Caco-2 (cell line): ENCODE measurements at regions of chr13 and their contacts with region 1.

Region 1: DNA sequence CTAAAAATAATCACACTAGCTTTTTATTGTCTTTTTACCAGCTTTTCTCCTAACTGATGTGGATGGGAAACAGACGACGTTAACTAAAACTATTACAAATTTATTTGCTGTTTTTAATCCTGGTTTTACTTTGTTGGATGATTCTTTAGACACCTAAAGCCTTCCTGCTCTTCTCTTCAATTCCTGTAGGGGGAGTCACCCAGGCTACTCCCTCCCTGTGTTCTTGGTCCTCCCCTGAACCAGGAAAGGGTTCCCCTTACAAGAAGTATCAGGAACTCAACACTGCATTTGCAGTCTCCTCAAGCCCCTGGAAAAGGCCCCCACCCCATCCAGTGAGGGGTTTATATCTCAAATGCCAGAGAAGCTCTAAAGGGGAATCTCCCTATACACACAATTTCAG is 206.1 kb downstream of the SUCLA2 start:
- DNase-seq: peak in 1 of 2 experiments; percentile 16
- H3K4me3 ChIP-seq: no peak overlapping the region
- H3K4me3 Mint-ChIP-seq: no peak overlapping the region
- H3K27ac Mint-ChIP-seq: no peak overlapping the region
- H3K4me1 ChIP-seq: no peaks in the 10 kb centered on the region
- H3K4me1 Mint-ChIP-seq: no peaks in the 10 kb centered on the region
- H3K27me3 ChIP-seq: no peaks in the 10 kb centered on the region
- H3K27me3 Mint-ChIP-seq: peaks cover 3% of the 10 kb centered on the region
- CTCF ChIP-seq: peak; percentile 36 to 44

Region 2: DNA sequence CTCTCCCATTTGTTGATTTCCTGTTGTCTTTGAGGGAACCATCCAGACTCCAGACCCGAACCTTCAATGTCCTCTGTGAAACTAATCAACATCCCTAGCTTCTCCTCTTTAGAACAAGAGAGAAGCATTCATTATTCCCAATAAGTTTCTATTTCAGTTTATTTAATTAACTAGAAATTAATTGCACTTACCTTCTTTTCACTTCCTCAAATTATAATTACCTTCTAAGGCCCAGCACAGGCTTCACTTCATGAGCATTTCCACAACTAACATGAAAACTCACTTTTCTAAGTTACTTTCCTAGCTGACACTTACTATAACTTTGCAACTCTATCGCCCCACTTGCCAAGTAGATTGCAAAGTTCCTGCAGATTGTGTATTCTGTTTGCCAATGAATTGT is 826.5 kb before region 1 on chr13:
- CTCF ChIA-PET with region 1: no interaction called
- POLR2A ChIA-PET with region 1: no interaction called
- intact Hi-C with region 1: no loop called
- DNase-seq: no peak
- H3K4me3 ChIP-seq: no peak overlapping the region
- H3K4me3 Mint-ChIP-seq: no peak overlapping the region
- H3K27ac Mint-ChIP-seq: no peak overlapping the region
- H3K4me1 ChIP-seq: no peaks in the 10 kb centered on the region
- H3K4me1 Mint-ChIP-seq: no peaks in the 10 kb centered on the region
- H3K27me3 ChIP-seq: 0 out of 2 replicates have a peak, but pooled peaks cover 1% of the 10 kb centered on the region
- H3K27me3 Mint-ChIP-seq: peaks cover 5% of the 10 kb centered on the region
- CTCF ChIP-seq: no peak

Region 3: GRCh38 chr13:47932950-47933923 is 138.3 kb after region 1 on chr13:
- CTCF ChIA-PET with region 1: no interaction called
- POLR2A ChIA-PET with region 1: no interaction called
- intact Hi-C with region 1: loop called (anchors 5 kb)
- DNase-seq: peak in 1 of 2 experiments; percentile 7
- H3K4me3 ChIP-seq: no peak overlapping the region
- H3K4me3 Mint-ChIP-seq: no peak overlapping the region
- H3K27ac Mint-ChIP-seq: no peak overlapping the region
- H3K4me1 ChIP-seq: no peaks in the 10 kb centered on the region
- H3K4me1 Mint-ChIP-seq: peaks cover 5% of the 10 kb centered on the region
- H3K27me3 ChIP-seq: no peaks in the 10 kb centered on the region
- H3K27me3 Mint-ChIP-seq: no peaks in the 10 kb centered on the region
- CTCF ChIP-seq: no peak

Region 4: DNA sequence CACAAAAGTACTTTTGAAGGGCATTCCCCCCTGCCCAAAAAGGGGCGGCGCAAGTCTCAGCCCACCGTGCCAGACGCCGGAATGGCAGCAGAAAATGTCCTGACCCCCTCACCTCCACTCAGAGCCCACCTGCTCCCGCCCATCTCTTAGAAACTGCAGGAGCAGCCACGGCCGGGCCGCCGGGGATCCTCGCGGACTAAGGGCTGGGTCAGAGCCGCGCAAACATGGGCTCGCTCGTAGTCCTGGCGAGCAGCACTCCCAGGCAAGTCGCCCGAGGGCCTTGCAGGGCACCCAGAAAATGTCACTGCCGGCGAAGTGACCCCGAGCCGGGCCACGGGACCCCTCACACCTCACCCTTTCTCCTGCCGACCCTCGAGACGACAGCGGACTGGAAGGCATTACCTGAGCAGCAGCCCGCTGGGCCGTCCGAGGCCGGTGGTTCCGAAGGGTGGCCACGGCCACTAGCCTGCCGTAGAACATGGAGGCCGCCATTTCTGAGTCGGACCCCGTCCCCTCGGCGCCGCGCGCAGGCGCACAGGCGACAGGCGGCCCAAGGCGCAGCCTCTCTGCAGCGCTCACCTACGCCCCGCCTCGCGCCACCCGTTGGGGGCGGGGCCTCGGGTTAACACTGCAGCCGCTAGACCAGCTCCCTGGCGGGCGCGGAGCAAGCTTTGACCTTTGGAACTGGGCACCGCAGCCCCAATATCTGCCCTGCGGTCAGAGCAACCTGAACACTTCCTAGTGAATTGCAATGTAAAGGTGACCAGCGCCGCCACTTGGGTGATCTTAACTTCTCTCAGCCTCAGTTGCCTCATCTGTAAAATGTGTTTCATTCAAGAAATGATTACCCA is 206.0 kb after region 1 on chr13 and contains the start of gene SUCLA2:
- CTCF ChIA-PET with region 1: no interaction called
- POLR2A ChIA-PET with region 1: no interaction called
- intact Hi-C with region 1: loop called (anchors 2 kb)
- DNase-seq: peak; percentile 95 to 98
- H3K4me3 ChIP-seq: peak within 1 kb of the TSS; percentile 92
- H3K4me3 Mint-ChIP-seq: peak within 1 kb of the TSS; percentile 100
- H3K27ac Mint-ChIP-seq: peak within 1 kb of the TSS; percentile 99
- H3K4me1 ChIP-seq: peaks cover 7% of the 10 kb centered on the region
- H3K4me1 Mint-ChIP-seq: peaks cover 26% of the 10 kb centered on the region
- H3K27me3 ChIP-seq: no peaks in the 10 kb centered on the region
- H3K27me3 Mint-ChIP-seq: no peaks in the 10 kb centered on the region
- CTCF ChIP-seq: no peak
- total RNA-seq, gene SUCLA2: 77.8 and 80.8 TPM in 2 replicates

Region 5: DNA sequence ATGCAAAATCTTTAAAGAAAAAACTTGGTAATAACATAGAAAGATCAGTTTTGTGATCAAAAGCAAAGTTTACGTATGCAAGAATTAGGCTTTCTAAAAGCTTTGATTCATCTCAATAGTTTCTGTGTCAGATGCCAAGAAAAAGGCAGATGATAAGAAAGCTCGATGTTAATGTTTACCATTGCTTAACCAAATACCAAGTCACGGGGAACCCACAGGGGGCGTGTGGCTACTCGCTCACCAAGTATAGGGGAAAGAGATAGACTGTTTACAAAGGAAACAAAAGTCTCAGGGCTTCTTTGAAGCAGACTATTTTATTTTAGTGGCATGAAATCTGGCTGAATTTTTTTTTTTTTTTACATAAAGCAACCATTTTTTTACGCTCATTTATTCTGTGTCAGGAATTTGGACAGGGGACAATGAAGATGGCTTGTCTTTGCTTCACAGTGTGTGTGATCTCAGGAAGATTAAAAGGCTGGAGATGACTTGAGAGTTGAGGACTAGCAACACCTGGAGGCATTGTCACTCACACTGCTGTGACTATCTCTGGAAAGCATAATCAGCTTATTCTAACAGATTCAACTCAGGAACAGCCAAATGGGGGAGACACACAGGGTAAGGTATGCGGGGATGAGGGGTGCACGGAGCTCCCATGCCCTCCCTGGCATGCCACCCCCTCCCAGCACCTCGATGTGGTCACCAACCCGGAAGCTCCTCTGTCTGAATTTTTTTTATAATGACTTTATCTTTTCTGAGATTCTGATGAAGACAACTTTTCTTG is 1765.5 kb after region 1 on chr13:
- CTCF ChIA-PET with region 1: no interaction called
- POLR2A ChIA-PET with region 1: no interaction called
- intact Hi-C with region 1: no loop called
- DNase-seq: peak; percentile 76 to 79
- H3K4me3 ChIP-seq: no peak overlapping the region
- H3K4me3 Mint-ChIP-seq: peak overlapping the region; percentile 45
- H3K27ac Mint-ChIP-seq: peak overlapping the region; percentile 74
- H3K4me1 ChIP-seq: peaks cover 11% of the 10 kb centered on the region
- H3K4me1 Mint-ChIP-seq: peaks cover 21% of the 10 kb centered on the region
- H3K27me3 ChIP-seq: no peaks in the 10 kb centered on the region
- H3K27me3 Mint-ChIP-seq: no peaks in the 10 kb centered on the region
- CTCF ChIP-seq: peak; percentile 62 to 71